GM12878 (cell line): ENCODE measurements at regions of chr5 and their contacts with region 1.

Region 1: GRCh38 chr5:116766470-116766947 is 191.9 kb upstream of the SEMA6A start:
- DNase-seq: peak; percentile 70
- ATAC-seq: peak; percentile 46
- H3K4me3 ChIP-seq: peak overlapping the region; percentile 43; the same call in 1 of the 2 replicates
- H3K27ac ChIP-seq: no peak overlapping the region
- H3K4me1 ChIP-seq: peaks cover 25% of the 10 kb centered on the region
- H3K27me3 ChIP-seq: no peaks in the 10 kb centered on the region
- CTCF ChIP-seq: no peak
- EP300 ChIP-seq: peak in 1 of 2 experiments; percentile 71; a peak in 1 of 4 replicates
- POLR2A ChIP-seq: no peak
- RAD21 ChIP-seq: no peak

Region 2: GRCh38 chr5:116583085-116583861 is 183.2 kb before region 1 on chr5:
- CTCF ChIA-PET with region 1: interaction called, 52 read pairs
- POLR2A ChIA-PET with region 1: interaction called, 52 read pairs
- RAD21 ChIA-PET with region 1: interaction called, 217 read pairs
- SMC1A ChIA-PET with region 1: interaction called, 133 read pairs
- in situ Hi-C with region 1: loop called (anchors 5 kb)
- intact Hi-C with region 1: no loop called
- DNase-seq: no peak
- ATAC-seq: peak; percentile 76
- H3K4me3 ChIP-seq: no peak overlapping the region
- H3K27ac ChIP-seq: no peak overlapping the region
- H3K4me1 ChIP-seq: no peaks in the 10 kb centered on the region
- H3K27me3 ChIP-seq: no peaks in the 10 kb centered on the region
- CTCF ChIP-seq: no peak
- EP300 ChIP-seq: no peak
- POLR2A ChIP-seq: no peak
- RAD21 ChIP-seq: no peak

Region 3: GRCh38 chr5:116645627-116646026 is 120.9 kb before region 1 on chr5:
- CTCF ChIA-PET with region 1: no interaction called
- POLR2A ChIA-PET with region 1: interaction called, 19 read pairs
- RAD21 ChIA-PET with region 1: interaction called, 41 read pairs
- SMC1A ChIA-PET with region 1: interaction called, 103 read pairs
- in situ Hi-C with region 1: no loop called
- intact Hi-C with region 1: no loop called
- DNase-seq: no peak
- ATAC-seq: peak; percentile 92
- H3K4me3 ChIP-seq: no peak overlapping the region
- H3K27ac ChIP-seq: no peak overlapping the region
- H3K4me1 ChIP-seq: no peaks in the 10 kb centered on the region
- H3K27me3 ChIP-seq: no peaks in the 10 kb centered on the region
- CTCF ChIP-seq: no peak
- EP300 ChIP-seq: peak in 1 of 2 experiments; percentile 38; a peak in 1 of 4 replicates
- POLR2A ChIP-seq: no peak
- RAD21 ChIP-seq: no peak

Region 4: GRCh38 chr5:116671211-116671736 is 95.2 kb before region 1 on chr5:
- CTCF ChIA-PET with region 1: interaction called, 20 read pairs
- POLR2A ChIA-PET with region 1: interaction called, 23 read pairs
- RAD21 ChIA-PET with region 1: interaction called, 121 read pairs
- SMC1A ChIA-PET with region 1: interaction called, 109 read pairs
- in situ Hi-C with region 1: no loop called
- intact Hi-C with region 1: loop called (anchors 1 kb)
- DNase-seq: peak; percentile 90
- ATAC-seq: peak; percentile 93
- H3K4me3 ChIP-seq: no peak overlapping the region; the same call in 1 of the 2 replicates
- H3K27ac ChIP-seq: peak overlapping the region; percentile 30; the same call in 1 of the 2 replicates
- H3K4me1 ChIP-seq: peaks cover 42% of the 10 kb centered on the region
- H3K27me3 ChIP-seq: no peaks in the 10 kb centered on the region
- CTCF ChIP-seq: no peak
- EP300 ChIP-seq: peak; percentile 87 to 95; a peak in 3 of 4 replicates
- POLR2A ChIP-seq: 0 out of 2 replicates have a peak, but pooled peaks have one; percentile 29
- RAD21 ChIP-seq: no peak

Region 5: GRCh38 chr5:116702776-116703175 is 63.7 kb before region 1 on chr5:
- CTCF ChIA-PET with region 1: interaction called, 6 read pairs
- POLR2A ChIA-PET with region 1: interaction called, 54 read pairs
- RAD21 ChIA-PET with region 1: interaction called, 134 read pairs
- SMC1A ChIA-PET with region 1: interaction called, 132 read pairs
- in situ Hi-C with region 1: no loop called
- intact Hi-C with region 1: no loop called
- DNase-seq: no peak
- ATAC-seq: peak; percentile 72
- H3K4me3 ChIP-seq: no peak overlapping the region
- H3K27ac ChIP-seq: peak overlapping the region; percentile 31
- H3K4me1 ChIP-seq: peaks cover 26% of the 10 kb centered on the region
- H3K27me3 ChIP-seq: no peaks in the 10 kb centered on the region
- CTCF ChIP-seq: no peak
- EP300 ChIP-seq: peak in 1 of 2 experiments; percentile 66; a peak in 1 of 4 replicates
- POLR2A ChIP-seq: no peak
- RAD21 ChIP-seq: no peak

Region 6: GRCh38 chr5:116885825-116886224 is 119.3 kb after region 1 on chr5:
- CTCF ChIA-PET with region 1: interaction called, 3 read pairs
- POLR2A ChIA-PET with region 1: interaction called, 12 read pairs
- RAD21 ChIA-PET with region 1: interaction called, 73 read pairs
- SMC1A ChIA-PET with region 1: interaction called, 14 read pairs
- in situ Hi-C with region 1: no loop called
- intact Hi-C with region 1: loop called (anchors 5 kb)
- DNase-seq: no peak
- ATAC-seq: peak; percentile 72
- H3K4me3 ChIP-seq: no peak overlapping the region
- H3K27ac ChIP-seq: no peak overlapping the region
- H3K4me1 ChIP-seq: peaks cover 23% of the 10 kb centered on the region
- H3K27me3 ChIP-seq: no peaks in the 10 kb centered on the region
- CTCF ChIP-seq: no peak; a peak in 1 of 6 replicates
- EP300 ChIP-seq: peak in 1 of 2 experiments; percentile 49; a peak in 1 of 4 replicates
- POLR2A ChIP-seq: no peak
- RAD21 ChIP-seq: no peak

Region 7: GRCh38 chr5:117161718-117162335 is 395.3 kb after region 1 on chr5:
- CTCF ChIA-PET with region 1: no interaction called
- POLR2A ChIA-PET with region 1: no interaction called
- RAD21 ChIA-PET with region 1: no interaction called
- SMC1A ChIA-PET with region 1: no interaction called
- in situ Hi-C with region 1: no loop called
- intact Hi-C with region 1: no loop called
- DNase-seq: no peak
- ATAC-seq: no peak
- H3K4me3 ChIP-seq: no peak overlapping the region
- H3K27ac ChIP-seq: no peak overlapping the region
- H3K4me1 ChIP-seq: no peaks in the 10 kb centered on the region
- H3K27me3 ChIP-seq: no peaks in the 10 kb centered on the region
- CTCF ChIP-seq: no peak
- EP300 ChIP-seq: no peak
- POLR2A ChIP-seq: no peak
- RAD21 ChIP-seq: no peak

Region 8: DNA sequence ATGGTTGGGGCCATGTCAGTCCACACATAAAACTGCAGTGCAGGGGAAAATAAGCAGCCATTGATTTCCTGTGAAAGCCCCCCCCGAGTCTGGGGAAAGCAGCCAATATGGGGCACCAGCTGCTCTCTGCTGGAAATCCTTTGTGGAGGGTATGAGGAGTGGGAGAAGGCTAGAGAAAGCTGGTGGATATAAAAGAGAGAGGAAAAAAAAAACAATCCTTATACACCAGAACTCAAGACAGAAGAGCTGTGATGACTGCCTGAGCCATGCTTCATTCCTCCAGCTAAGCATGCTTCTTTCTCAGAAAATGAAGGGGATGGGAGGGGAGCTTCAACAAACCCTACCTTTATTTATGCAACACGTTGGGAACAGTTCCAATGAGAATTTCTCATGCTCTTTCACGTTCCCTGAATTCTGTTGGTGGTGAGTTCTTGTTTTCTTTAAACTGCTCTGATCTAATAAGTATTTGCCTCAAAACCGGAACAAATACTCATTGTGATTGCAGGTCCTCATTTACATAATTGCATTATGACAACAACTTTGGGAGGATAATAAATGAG is 496.1 kb after region 1 on chr5:
- CTCF ChIA-PET with region 1: no interaction called
- POLR2A ChIA-PET with region 1: no interaction called
- RAD21 ChIA-PET with region 1: no interaction called
- SMC1A ChIA-PET with region 1: no interaction called
- in situ Hi-C with region 1: no loop called
- intact Hi-C with region 1: no loop called
- DNase-seq: no peak
- ATAC-seq: no peak
- H3K4me3 ChIP-seq: no peak overlapping the region
- H3K27ac ChIP-seq: no peak overlapping the region
- H3K4me1 ChIP-seq: no peaks in the 10 kb centered on the region
- H3K27me3 ChIP-seq: no peaks in the 10 kb centered on the region
- CTCF ChIP-seq: no peak
- EP300 ChIP-seq: no peak
- POLR2A ChIP-seq: no peak
- RAD21 ChIP-seq: no peak